HepG2 (cell line): ENCODE measurements at regions of chr17 and their contacts with region 1.

Region 1: DNA sequence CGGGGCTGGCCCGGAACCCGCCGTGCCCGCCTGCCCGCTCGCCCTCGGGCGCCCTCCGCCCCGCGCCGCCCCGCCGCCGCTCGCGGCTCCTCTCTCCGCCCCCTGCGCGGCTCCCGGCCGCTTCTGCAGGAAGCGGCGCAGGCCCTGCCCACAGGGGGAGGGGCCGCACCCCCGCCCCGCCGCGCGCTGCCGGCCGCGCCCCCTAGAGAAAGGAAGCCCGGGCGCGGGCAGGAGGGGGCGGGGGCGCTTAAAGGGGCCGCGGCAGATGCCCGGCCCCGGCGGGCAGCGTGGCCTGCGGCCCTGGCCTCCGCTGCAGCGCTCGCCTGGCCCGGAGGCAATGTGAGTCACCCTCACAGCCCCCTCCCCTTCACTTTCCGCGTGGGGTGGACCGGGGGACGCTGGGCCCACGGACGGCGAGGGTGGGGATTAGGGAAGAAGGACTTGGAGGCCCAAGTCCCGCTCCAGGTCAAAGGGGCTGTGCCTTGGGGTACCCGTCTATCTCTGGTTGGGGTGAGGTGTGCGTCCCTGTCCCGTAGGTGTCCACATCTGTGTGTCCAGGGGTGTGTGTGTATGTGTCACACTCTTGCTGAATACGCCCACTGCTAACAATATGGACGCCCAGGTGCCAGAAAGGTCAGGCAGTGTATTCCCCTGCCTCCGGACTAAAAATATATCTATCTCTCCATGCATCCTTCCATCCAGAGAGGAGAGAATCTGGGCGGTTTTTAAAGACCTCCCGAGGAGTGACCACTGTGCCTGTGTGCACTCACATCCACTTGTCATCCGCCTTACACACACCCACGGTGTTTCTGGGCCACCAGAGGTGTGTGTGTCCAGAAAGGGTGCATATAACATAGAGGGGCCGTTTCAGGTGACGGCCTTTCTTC is at the start of gene GIT1:
- DNase-seq: peak; percentile 70
- ATAC-seq: peak; percentile 49
- H3K4me3 ChIP-seq: peak within 1 kb of the TSS; percentile 70 to 98 (median 91)
- H3K27ac ChIP-seq: peak within 1 kb of the TSS; percentile 62
- H3K4me1 ChIP-seq: peaks cover 58% of the 10 kb centered on the region
- H3K27me3 ChIP-seq: peaks cover 1 to 9% of the 10 kb centered on the region in 2 experiments; a peak in 3 of 5 replicates
- CTCF ChIP-seq: no peak; the same call in 1 of the 2 replicates
- EP300 ChIP-seq: no peak
- POLR2A ChIP-seq: peak in 1 of 2 experiments; percentile 57; a peak in 1 of 4 replicates
- RAD21 ChIP-seq: no peak
- total RNA-seq, gene GIT1: 12.9 and 14.2 TPM in 2 replicates

Region 2: GRCh38 chr17:29369831-29370735 is 219.7 kb before region 1 on chr17:
- CTCF ChIA-PET with region 1: interaction called, 10 read pairs
- POLR2A ChIA-PET with region 1: no interaction called
- in situ Hi-C with region 1: no loop called
- intact Hi-C with region 1: loop called (anchors 10 kb)
- DNase-seq: peak; percentile 65
- ATAC-seq: peak; percentile 88
- H3K4me3 ChIP-seq: no peak overlapping the region
- H3K27ac ChIP-seq: no peak overlapping the region
- H3K4me1 ChIP-seq: no peaks in the 10 kb centered on the region
- H3K27me3 ChIP-seq: no peaks in the 10 kb centered on the region
- CTCF ChIP-seq: peak; percentile 79
- EP300 ChIP-seq: no peak
- POLR2A ChIP-seq: no peak
- RAD21 ChIP-seq: peak; percentile 49; the same call in 1 of the 2 replicates

Region 3: DNA sequence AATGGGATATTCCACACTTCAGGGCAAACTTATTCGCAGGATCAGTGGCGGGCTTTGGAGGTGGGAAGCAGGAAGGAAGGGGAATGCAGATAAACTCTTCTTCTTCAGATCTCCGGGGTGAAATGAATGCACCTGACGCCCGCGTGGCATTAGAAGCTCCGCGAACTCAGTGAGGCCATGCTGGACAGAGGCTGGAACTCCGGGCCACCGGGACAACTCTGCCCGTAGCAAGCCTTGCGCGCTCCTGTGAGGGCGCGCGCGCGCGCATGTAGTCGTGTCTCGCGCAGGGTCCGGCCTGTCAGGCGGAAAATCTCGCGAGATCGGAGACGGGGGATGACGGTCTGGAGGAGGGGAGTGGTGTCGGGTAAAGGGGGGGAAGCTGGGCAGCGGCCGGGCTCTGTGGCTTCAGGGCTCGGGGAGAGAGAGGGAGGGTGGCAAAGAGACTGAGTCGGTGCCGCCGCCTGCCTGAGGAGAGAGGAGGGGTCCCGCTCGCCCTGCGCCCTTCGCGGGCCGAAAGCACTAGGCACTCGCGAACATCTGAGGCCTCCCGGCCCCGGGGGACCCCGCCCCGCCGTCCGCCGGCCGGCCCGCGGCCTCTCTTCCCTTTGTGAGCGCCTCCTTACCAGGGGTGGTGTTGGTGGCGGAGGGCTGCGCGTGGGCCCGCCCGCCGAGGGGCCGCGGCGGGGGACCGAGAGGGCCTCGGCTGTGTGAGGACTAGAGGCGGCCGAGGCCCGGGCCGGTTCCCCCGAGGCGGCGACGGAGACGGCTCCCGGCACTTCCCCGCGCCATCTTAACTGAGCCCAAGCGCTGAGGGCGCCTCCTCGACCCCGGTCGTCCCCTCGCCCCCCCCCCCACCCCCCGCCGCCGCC is 199.6 kb before region 1 on chr17 and contains the start of gene TAOK1:
- CTCF ChIA-PET with region 1: no interaction called
- POLR2A ChIA-PET with region 1: interaction called, 15 read pairs
- in situ Hi-C with region 1: no loop called
- intact Hi-C with region 1: no loop called
- DNase-seq: peak; percentile 95
- ATAC-seq: peak; percentile 93
- H3K4me3 ChIP-seq: peak within 1 kb of the TSS; percentile 86 to 87 (median 86)
- H3K27ac ChIP-seq: peak within 1 kb of the TSS; percentile 93
- H3K4me1 ChIP-seq: peaks cover 45% of the 10 kb centered on the region
- H3K27me3 ChIP-seq: no peaks in the 10 kb centered on the region; a peak in 1 of 5 replicates
- CTCF ChIP-seq: no peak
- EP300 ChIP-seq: peak in 1 of 2 experiments; percentile 30; a peak in 1 of 4 replicates
- POLR2A ChIP-seq: peak; percentile 94
- RAD21 ChIP-seq: no peak
- total RNA-seq, gene TAOK1: 23.0 and 36.2 TPM in 2 replicates

Region 4: DNA sequence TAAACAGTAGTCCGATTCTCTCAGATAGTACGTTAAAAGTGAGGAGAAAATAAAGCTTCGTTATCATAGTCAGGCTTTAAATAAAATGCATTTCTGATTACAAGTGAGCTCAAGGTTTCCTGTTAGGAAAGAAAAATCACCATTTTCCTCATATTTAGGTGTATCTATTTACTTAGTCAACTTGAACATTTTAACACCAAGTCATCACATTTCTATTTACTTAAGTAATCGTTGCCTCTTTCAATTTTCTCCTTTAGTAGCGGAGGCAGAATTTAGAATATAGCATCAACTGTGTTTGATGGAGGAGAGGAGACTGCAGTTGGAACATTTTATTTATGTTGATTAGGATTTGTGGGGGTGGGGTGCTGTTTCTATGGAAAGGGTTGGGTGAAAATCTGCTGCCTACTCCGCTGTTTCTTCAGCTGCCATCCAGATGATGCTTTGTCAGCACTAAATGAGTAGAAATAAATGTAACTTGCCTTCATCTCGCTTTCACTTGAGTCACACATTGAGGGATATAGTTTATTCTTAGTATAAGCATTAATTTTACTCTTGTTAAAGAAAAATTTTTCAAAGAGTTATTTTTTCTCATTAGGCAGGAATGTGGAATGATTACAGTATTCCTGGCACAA is 65.2 kb before region 1 on chr17:
- CTCF ChIA-PET with region 1: no interaction called
- POLR2A ChIA-PET with region 1: no interaction called
- in situ Hi-C with region 1: no loop called
- intact Hi-C with region 1: no loop called
- DNase-seq: no peak
- ATAC-seq: no peak
- H3K4me3 ChIP-seq: no peak overlapping the region
- H3K27ac ChIP-seq: no peak overlapping the region
- H3K4me1 ChIP-seq: 0 out of 2 replicates have a peak, but pooled peaks cover 4% of the 10 kb centered on the region
- H3K27me3 ChIP-seq: no peaks in the 10 kb centered on the region
- CTCF ChIP-seq: no peak
- EP300 ChIP-seq: no peak
- POLR2A ChIP-seq: no peak
- RAD21 ChIP-seq: no peak

Region 5: DNA sequence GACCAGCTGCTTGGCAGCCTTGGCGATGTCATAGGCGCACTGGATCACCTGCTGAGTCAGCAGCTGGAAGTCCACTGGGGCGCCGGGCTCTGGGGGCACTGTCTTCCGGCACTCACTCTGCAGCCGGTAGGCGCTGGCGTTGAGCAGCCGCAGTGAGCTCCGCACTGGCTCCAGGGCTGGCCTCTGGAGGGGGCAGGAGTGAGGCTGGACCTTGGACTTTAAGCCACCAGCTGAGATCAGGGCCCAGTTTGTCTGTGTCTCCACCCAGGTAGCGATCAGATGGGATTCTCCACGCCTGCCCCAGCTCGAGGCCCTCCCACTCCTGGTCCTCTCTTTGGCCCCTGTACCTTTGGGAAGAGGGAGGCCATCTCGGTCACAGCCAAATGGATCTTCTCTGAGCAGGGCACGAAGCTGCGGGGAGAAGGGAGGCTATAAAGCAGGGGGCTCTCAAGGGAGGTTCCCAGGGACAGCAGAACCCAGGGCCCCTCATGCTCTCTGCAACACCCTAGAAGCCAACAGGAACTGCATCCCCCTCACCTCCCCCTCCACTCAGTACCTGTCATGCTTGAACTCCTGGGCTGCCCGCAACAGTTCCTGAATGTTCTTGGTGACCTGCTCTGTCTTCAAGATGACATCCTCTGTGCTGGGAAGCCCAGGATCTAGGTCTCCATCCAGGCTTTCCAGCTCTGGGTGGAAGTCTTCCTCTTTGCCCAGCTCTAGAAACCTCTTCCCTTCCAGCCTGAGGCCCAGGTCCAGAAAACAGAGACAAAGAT is 14.8 kb before region 1 on chr17:
- CTCF ChIA-PET with region 1: interaction called, 39 read pairs
- POLR2A ChIA-PET with region 1: interaction called, 23 read pairs
- in situ Hi-C with region 1: no loop called
- intact Hi-C with region 1: loop called (anchors 1 kb)
- DNase-seq: peak; percentile 90
- ATAC-seq: peak; percentile 95
- H3K4me3 ChIP-seq: peak overlapping the region in 1 of 3 experiments; percentile 30; a peak in 1 of 6 replicates
- H3K27ac ChIP-seq: peak overlapping the region; percentile 60
- H3K4me1 ChIP-seq: peaks cover 23% of the 10 kb centered on the region
- H3K27me3 ChIP-seq: no peaks in the 10 kb centered on the region
- CTCF ChIP-seq: peak; percentile 65
- EP300 ChIP-seq: peak; percentile 46 to 62; a peak in 2 of 4 replicates
- POLR2A ChIP-seq: 0 out of 4 replicates have a peak, but pooled peaks of 1 of the 2 experiments have one; percentile 23
- RAD21 ChIP-seq: peak; percentile 61